Right ventricle myocardium inferior (tissue), 1 donor: ENCODE measurements at regions of chr4 and their contacts with region 1.

Region 1: GRCh38 chr4:141133146-141133998 is at the start of gene RNF150:
- DNase-seq: peak; percentile 86
- ATAC-seq: peak; percentile 85
- total RNA-seq, gene RNF150: 56.1 TPM

Region 2: DNA sequence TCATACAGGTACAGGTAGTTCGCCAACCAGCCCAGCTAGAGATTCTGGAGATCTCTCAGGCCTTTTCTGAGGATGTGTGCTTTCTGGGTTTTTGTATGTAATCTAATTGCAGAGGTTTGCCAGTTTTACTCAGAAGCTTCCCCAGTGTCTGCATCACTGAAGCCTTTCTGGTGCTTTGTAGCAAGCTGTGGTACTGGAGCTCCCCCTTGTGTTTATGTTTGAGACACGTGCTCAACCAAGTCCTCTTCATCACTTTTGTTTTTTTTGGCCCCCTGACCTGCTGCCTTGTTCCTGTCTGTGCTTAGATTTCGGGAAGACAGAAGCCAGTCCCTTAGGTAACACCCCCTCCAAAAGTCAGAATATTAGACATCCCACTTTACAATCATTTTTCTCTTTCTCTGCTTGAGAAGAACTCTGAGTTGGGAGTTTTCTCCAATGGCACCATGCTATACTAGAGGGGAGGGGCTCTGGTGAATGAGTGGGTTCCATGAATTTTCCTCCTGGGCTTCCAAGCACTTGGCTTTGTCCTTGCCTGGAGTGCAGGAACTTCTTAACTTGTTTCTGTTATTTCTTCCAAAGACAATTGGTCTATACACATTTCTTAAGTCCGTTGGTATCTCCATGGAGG is 248.8 kb before region 1 on chr4:
- intact Hi-C with region 1: loop called (anchors 2 kb)
- DNase-seq: no peak
- ATAC-seq: peak; percentile 63

Region 3: GRCh38 chr4:140935254-140935653 is 198.1 kb before region 1 on chr4:
- intact Hi-C with region 1: loop called (anchors 5 kb)
- DNase-seq: no peak
- ATAC-seq: peak; percentile 67

Region 4: GRCh38 chr4:140982613-140983340 is 150.6 kb before region 1 on chr4:
- intact Hi-C with region 1: loop called (anchors 5 kb)
- DNase-seq: no peak
- ATAC-seq: peak; percentile 67

Region 5: DNA sequence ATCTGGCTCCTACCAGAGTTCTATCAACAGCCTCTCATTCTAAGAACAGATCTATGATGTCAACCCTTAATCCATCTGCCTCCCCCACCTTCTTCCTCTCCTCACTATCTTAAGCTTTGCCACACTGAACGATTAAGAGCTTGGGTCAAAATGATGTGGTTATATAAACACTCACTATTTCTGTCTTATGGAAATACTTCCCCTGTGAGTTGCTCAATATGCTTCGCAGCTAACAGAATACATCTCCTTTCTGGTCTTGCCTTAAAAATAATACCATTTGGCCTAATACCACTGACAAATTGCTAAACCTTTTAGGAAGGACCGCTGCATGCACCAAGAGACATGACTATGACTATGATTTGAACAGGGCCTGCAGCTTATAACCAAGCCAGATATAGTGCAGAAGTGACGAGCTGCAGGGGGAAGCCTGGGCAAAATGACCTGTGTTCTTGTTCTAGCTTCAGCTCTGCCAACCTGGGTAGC is 131.0 kb before region 1 on chr4:
- intact Hi-C with region 1: loop called (anchors 5 kb)
- DNase-seq: no peak
- ATAC-seq: peak; percentile 84